PC-3 (cell line): ENCODE measurements at regions of chr15 and their contacts with region 1.

Region 1: DNA sequence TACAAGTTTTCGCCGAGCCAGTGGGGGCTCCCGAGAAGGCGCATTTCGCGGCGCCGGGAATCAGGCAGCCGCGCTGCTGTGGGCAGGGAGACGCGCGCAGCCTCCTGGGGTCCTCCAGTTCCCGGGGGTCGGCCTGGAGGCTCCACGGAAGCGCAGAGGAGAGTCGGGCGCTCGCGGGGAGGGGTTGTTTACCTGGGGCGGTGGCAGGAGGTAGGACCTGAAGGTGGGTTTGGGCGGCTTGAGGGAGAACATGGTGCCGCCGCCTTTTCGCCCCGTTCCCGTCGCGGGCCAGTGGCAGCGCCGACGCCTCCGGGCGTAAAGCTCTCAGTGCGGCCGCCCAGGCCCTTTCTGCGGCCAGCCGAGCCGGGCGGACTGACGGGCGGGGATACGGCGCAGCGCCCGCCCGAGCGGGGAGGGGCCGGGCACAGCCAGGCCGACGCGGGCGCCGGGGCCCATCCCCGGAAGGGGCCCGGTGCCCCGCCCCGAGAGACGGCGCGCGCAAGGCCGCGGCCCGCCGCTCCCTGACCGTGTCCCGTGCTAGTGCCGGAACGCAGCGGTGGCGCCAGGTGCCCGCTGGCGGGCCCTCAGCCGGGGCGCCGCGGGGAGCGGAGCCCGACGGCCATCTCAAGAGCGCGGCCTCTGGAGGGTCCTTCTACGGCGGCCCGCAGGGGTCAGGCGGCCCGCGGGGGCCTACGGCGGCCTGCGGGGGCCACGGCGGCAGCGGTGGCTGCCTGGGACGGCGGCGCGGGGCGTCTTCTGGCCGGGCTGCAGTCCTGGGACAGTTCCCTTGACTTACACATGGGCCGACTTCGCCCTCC is at the start of gene MTMR10:
- DNase-seq: peak; percentile 85
- ATAC-seq: peak; percentile 92
- H3K4me3 ChIP-seq: peak within 1 kb of the TSS; percentile 100
- H3K27ac ChIP-seq: peak within 1 kb of the TSS; percentile 22; the same call in 1 of the 2 replicates
- H3K4me1 ChIP-seq: peaks cover 20% of the 10 kb centered on the region
- H3K27me3 ChIP-seq: no peaks in the 10 kb centered on the region
- CTCF ChIP-seq: no peak
- total RNA-seq, gene MTMR10: 7.6 and 9.7 TPM in 2 replicates

Region 2: GRCh38 chr15:30824518-30825165 is 166.8 kb before region 1 on chr15:
- CTCF ChIA-PET with region 1: no interaction called
- POLR2A ChIA-PET with region 1: no interaction called
- intact Hi-C with region 1: loop called (anchors 10 kb)
- DNase-seq: no peak
- ATAC-seq: no peak
- H3K4me3 ChIP-seq: no peak overlapping the region
- H3K27ac ChIP-seq: no peak overlapping the region
- H3K4me1 ChIP-seq: no peaks in the 10 kb centered on the region; the same call in 1 of the 2 replicates
- H3K27me3 ChIP-seq: peaks cover 13% of the 10 kb centered on the region; the same call in 1 of the 2 replicates
- CTCF ChIP-seq: no peak

Region 3: DNA sequence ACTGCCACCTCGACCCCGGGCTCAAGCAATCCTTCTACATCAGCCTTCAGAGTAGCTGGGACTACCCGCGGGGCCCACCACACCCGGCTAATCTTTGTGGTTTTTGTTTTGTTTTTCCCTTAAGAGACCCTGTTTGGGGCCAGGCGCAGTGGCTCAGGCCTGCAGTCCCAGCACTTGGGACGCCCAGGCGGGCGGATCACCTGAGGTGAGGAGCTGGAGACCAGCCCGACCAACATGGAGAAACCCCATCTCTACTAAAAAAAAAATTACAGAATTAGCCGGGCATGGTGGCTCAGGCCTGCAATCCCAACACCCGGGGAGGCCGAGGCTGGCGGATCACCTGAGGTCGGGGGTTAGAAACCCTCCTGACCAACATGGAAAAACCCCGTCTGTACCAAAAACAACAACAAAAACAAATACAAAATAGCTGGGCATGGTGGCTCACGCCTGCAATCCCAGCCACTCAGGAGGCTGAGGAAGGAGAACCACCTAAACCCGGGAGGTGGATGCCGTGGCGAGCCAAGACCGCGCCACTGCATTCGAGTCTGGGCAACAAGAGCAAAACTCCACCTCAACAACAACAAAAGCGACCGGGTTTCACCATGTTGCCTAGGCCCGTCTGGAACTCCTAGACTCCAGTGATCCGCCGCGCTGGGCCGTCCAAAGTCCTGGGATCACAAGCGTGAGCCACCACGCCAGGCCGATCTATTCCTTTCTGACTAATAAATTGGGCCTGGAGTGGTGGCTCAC is 95.8 kb before region 1 on chr15:
- CTCF ChIA-PET with region 1: no interaction called
- POLR2A ChIA-PET with region 1: no interaction called
- intact Hi-C with region 1: loop called (anchors 2 kb)
- DNase-seq: no peak
- ATAC-seq: no peak
- H3K4me3 ChIP-seq: no peak overlapping the region
- H3K27ac ChIP-seq: no peak overlapping the region
- H3K4me1 ChIP-seq: peaks cover 15% of the 10 kb centered on the region
- H3K27me3 ChIP-seq: no peaks in the 10 kb centered on the region
- CTCF ChIP-seq: no peak

Region 4: GRCh38 chr15:30903497-30904201 is 87.8 kb before region 1 on chr15 and contains the start of gene FAN1:
- CTCF ChIA-PET with region 1: no interaction called
- POLR2A ChIA-PET with region 1: no interaction called
- intact Hi-C with region 1: loop called (anchors 2 kb)
- DNase-seq: peak; percentile 93
- ATAC-seq: peak; percentile 97
- H3K4me3 ChIP-seq: peak within 1 kb of the TSS; percentile 92
- H3K27ac ChIP-seq: peak within 1 kb of the TSS; percentile 41
- H3K4me1 ChIP-seq: peaks cover 10% of the 10 kb centered on the region; the same call in 1 of the 2 replicates
- H3K27me3 ChIP-seq: no peaks in the 10 kb centered on the region
- CTCF ChIP-seq: no peak
- total RNA-seq, gene FAN1: 16.2 and 16.4 TPM in 2 replicates

Region 5: GRCh38 chr15:30940359-30940758 is 51.1 kb before region 1 on chr15:
- CTCF ChIA-PET with region 1: no interaction called
- POLR2A ChIA-PET with region 1: no interaction called
- intact Hi-C with region 1: loop called (anchors 2 kb)
- DNase-seq: peak; percentile 10
- ATAC-seq: peak; percentile 97
- H3K4me3 ChIP-seq: no peak overlapping the region
- H3K27ac ChIP-seq: no peak overlapping the region
- H3K4me1 ChIP-seq: no peaks in the 10 kb centered on the region
- H3K27me3 ChIP-seq: no peaks in the 10 kb centered on the region
- CTCF ChIP-seq: no peak

Region 6: DNA sequence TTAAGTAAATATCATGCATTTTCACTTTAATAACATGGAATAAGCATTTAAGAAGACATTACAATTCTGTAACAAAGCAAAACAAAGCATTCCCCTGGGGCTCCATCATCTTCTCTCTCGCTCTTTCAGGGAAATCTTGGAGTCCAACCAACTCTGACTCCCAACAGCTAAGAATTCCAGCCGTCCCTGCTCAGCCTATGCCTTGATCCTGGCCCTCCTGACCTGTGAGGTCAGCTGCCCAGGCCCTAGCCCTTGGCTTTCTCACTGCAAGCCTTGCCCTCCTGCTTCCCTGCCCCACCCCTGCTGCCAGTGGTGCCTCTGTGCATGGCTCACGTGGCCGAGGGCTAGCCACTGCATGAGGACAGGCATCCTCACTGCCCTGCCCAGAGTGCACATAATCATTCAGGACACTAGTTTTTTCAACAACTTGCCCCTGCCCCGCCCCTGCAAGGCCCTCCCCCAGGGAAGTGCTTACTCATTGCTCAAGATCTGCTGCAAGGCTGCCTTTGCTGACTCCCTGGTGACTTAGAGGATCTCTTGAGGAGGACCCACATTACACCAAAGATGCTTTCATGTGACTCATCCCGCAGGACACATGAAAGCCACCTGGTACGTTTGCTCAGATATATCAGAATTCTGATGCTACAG is 37.6 kb before region 1 on chr15:
- CTCF ChIA-PET with region 1: no interaction called
- POLR2A ChIA-PET with region 1: no interaction called
- intact Hi-C with region 1: loop called (anchors 2 kb)
- DNase-seq: peak; percentile 91
- ATAC-seq: peak; percentile 97
- H3K4me3 ChIP-seq: no peak overlapping the region
- H3K27ac ChIP-seq: peak overlapping the region; percentile 48
- H3K4me1 ChIP-seq: peaks cover 16% of the 10 kb centered on the region
- H3K27me3 ChIP-seq: no peaks in the 10 kb centered on the region
- CTCF ChIP-seq: no peak

Region 7: DNA sequence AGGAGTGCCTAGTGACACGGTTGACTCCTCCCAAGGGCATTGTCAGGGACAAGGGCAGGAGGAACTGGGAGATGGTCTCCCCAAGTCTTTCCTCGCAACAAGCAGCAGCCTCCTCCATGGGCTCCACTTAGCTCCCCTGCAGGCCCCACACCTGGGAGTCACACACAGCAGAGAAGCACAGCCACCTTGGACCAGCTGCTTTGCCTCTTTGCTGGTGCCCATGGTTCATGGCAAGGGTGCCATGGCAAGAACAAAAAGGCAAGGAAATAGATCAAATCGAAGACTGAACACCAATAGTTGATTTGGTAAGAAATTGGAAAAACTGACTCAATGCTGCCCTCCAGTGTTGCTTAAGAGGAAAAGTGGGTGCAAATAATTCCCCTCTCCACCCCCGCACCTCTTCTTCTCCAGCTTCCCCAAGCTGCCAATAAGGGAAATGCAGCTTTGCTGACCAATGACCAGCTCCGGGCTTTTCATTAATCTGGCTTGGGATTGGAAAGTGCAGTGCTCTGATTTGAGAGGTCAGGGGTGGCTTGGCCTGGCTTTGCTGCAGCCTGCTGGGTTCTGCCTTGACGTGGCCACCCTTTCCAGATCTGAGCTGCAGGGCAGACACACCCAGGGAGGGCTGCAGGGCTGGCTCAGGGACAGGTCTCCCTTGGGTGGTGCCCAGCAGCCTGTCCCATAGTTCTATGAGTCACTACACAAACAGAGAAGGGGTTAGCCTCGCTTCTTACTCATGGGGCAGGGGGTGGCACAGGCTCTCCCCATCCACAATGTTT is 497.2 kb after region 1 on chr15:
- CTCF ChIA-PET with region 1: no interaction called
- POLR2A ChIA-PET with region 1: no interaction called
- intact Hi-C with region 1: loop called (anchors 5 kb)
- DNase-seq: peak; percentile 83
- ATAC-seq: peak; percentile 91
- H3K4me3 ChIP-seq: no peak overlapping the region
- H3K27ac ChIP-seq: peak overlapping the region; percentile 67
- H3K4me1 ChIP-seq: peaks cover 24% of the 10 kb centered on the region
- H3K27me3 ChIP-seq: no peaks in the 10 kb centered on the region
- CTCF ChIP-seq: peak; percentile 93